GM18951 (cell line): ENCODE measurements at regions of chr1 and their contacts with region 1.

Region 1: GRCh38 chr1:99170516-99170915 is 93.8 kb upstream of the PLPPR4 start:
- POLR2A ChIP-seq: no peak

Region 2: DNA sequence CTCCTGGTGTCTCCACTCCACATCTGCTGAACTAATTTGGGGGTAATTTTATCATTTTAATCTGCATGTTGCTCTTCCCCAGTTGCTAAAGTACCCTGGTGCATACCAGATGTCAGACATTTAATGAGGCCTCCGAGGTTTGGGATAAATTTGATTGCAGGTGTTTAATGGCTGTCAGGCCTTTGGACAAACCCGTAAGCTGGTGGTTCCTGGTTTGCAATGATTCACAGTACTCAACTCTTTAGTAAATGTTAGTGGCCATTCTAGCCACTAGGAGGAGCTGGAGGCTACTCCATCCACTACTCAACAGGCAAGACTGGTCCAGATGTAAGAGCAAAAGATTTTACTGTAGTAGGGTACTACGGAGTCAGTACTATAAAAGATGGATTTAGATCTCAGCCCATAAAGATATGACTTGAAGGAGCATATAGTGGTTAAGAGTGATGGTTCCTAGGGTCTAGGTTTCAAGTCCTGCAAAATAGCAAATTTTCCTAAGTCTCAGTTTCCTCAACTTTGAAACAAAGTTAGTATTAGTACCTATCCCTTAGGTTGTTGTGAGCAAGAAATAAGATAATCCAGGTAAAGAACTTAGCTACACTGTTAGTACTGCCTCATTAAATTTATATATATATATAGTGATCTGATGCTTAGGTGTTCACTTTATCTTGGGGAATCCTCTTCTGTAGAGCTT is 376.2 kb before region 1 on chr1:
- in situ Hi-C with region 1: loop called (anchors 10 kb)
- POLR2A ChIP-seq: no peak

Region 3: GRCh38 chr1:99084562-99084961 is 86.0 kb before region 1 on chr1:
- in situ Hi-C with region 1: no loop called
- POLR2A ChIP-seq: no peak

Region 4: GRCh38 chr1:99292886-99293285 is 122.4 kb after region 1 on chr1:
- in situ Hi-C with region 1: no loop called
- POLR2A ChIP-seq: no peak